Posterior vena cava (tissue), 2 donors: ENCODE measurements at regions of chrX and their contacts with region 1.

Region 1: DNA sequence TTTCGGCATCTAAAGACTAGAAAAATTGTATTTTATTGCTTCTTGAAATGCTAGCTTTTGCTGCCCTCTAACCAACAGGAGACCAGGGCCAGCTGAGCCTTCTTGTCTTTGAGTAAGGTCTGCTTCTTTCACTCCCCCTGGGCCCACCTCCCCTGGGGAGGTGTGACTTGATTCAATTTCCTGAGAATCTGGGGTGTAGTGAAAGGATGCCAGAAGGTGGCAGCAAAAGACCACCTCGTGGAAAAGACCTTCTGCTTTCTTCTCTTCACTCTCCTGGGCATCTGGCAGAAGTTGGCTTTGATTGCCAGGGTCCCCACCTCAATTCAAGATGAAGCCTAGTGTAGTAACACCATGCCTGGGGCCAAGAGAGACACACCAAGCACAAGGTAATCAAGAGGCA is 96.5 kb upstream of the MAOA start:
- DNase-seq: no peak

Region 2: DNA sequence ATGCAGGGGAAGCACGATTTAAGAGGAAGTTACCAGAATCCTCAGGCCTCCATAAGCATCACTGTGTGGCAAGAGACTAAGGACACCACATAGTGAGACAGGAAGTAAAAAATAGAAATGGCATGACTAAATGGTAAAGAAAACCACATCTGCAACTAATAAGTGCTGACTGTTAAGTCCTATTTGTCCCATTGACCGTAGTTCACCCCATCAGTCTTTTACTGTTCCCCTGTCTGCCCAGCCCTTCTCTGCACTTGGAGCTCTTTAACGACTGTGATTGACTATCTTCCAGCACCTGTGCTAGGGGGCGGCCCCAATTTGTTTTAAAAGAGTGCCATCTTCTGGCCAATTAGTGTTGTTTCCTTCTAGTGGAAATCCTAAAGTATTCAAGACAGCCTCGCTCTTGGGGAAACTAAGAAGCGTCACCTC is 190.6 kb after region 1 on chrX:
- intact Hi-C with region 1: loop called in 1 of 2 experiments (anchors 5 kb)
- DNase-seq: no peak